Esophagus muscularis mucosa (tissue), 4 donors: ENCODE measurements at regions of chr1 and their contacts with region 1.

Region 1: GRCh38 chr1:113226148-113226547 is 153.2 kb downstream of the LRIG2 start:
- DNase-seq: no peak
- H3K4me3 ChIP-seq: no peak overlapping the region
- H3K27ac ChIP-seq: no peak overlapping the region
- H3K4me1 ChIP-seq: no peaks in the 10 kb centered on the region
- H3K27me3 ChIP-seq: no peaks in the 10 kb centered on the region
- CTCF ChIP-seq: no peak
- EP300 ChIP-seq: no peak
- POLR2A ChIP-seq: no peak

Region 2: GRCh38 chr1:112955781-112956543 is 270.2 kb before region 1 on chr1 and contains the start of gene SLC16A1:
- intact Hi-C with region 1: no loop called
- DNase-seq: peak; percentile 97
- H3K4me3 ChIP-seq: peak within 1 kb of the TSS; percentile 74 to 82 (median 78)
- H3K27ac ChIP-seq: peak within 1 kb of the TSS; percentile 85 to 94 (median 93)
- H3K4me1 ChIP-seq: peaks cover 21 to 62% (median 60%) of the 10 kb centered on the region in 4 donors
- H3K27me3 ChIP-seq: no peaks in the 10 kb centered on the region
- CTCF ChIP-seq: peak; percentile 14 to 42 (median 31)
- EP300 ChIP-seq: no peak
- POLR2A ChIP-seq: peak; percentile 48
- total RNA-seq, gene SLC16A1: 29.9 to 40.1 (median 33.7) TPM

Region 3: GRCh38 chr1:113140588-113141446 is 85.3 kb before region 1 on chr1:
- intact Hi-C with region 1: no loop called
- DNase-seq: no peak
- H3K4me3 ChIP-seq: peak overlapping the region; percentile 1 to 26 (median 8)
- H3K27ac ChIP-seq: peak overlapping the region in 1 of 4 donors; percentile 32
- H3K4me1 ChIP-seq: peaks cover 8 to 45% (median 40%) of the 10 kb centered on the region in 4 donors
- H3K27me3 ChIP-seq: no peaks in the 10 kb centered on the region
- CTCF ChIP-seq: peak; percentile 69 to 87 (median 82)
- EP300 ChIP-seq: no peak
- POLR2A ChIP-seq: no peak

Region 4: GRCh38 chr1:113199760-113200455 is 26.2 kb before region 1 on chr1:
- intact Hi-C with region 1: no loop called
- DNase-seq: peak; percentile 75
- H3K4me3 ChIP-seq: no peak overlapping the region
- H3K27ac ChIP-seq: no peak overlapping the region
- H3K4me1 ChIP-seq: no peaks in the 10 kb centered on the region
- H3K27me3 ChIP-seq: no peaks in the 10 kb centered on the region
- CTCF ChIP-seq: no peak
- EP300 ChIP-seq: no peak
- POLR2A ChIP-seq: no peak

Region 5: GRCh38 chr1:113242481-113242880 is 16.3 kb after region 1 on chr1:
- intact Hi-C with region 1: loop called (anchors 1 kb)
- DNase-seq: no peak
- H3K4me3 ChIP-seq: no peak overlapping the region
- H3K27ac ChIP-seq: no peak overlapping the region
- H3K4me1 ChIP-seq: peaks cover 0 to 5% (median 0%) of the 10 kb centered on the region in 4 donors
- H3K27me3 ChIP-seq: no peaks in the 10 kb centered on the region
- CTCF ChIP-seq: no peak
- EP300 ChIP-seq: no peak
- POLR2A ChIP-seq: no peak